IMR-90 (cell line): ENCODE measurements at regions of chr12 and their contacts with region 1.

Region 1: DNA sequence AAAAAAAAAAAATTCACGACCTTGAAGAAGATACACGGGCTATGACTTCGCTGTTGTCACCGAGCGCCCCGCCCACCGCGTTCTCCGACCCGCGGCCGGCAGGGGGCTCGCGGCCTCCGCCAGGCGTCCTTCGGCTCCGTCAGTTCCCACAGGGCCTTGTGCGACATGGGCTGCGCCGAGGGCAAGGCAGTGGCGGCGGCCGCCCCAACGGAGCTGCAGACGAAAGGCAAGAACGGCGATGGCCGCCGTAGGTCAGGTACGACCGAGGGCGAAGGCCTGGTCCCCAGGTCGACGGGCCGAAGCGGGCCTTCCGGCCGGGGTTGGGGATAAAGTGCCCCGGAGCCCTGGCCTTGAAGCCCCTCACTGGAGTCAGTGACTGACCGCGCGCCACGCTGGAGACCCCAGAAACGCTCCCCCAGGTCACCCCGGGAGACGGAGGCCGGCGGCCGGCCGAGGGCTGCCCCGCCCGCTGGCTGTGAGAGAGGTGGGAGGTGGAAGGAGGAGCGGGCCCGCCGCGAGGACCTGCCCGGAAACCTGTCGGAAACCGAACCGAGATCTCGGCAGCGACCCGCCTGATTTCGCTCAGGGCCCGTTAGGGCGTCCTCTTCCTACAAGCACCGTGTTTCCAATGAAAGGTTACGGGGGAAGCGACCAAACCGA is at the start of gene TXNRD1:
- DNase-seq: peak; percentile 76
- ATAC-seq: peak; percentile 71
- H3K4me3 ChIP-seq: peak within 1 kb of the TSS; percentile 57
- H3K27ac ChIP-seq: peak within 1 kb of the TSS; percentile 81
- H3K4me1 ChIP-seq: peaks cover 13% of the 10 kb centered on the region
- H3K27me3 ChIP-seq: no peaks in the 10 kb centered on the region
- CTCF ChIP-seq: peak; percentile 90
- POLR2A ChIP-seq: peak; percentile 63; the same call in 1 of the 2 replicates
- RAD21 ChIP-seq: peak; percentile 87
- total RNA-seq, gene TXNRD1: 582 and 671 TPM in 2 replicates

Region 2: DNA sequence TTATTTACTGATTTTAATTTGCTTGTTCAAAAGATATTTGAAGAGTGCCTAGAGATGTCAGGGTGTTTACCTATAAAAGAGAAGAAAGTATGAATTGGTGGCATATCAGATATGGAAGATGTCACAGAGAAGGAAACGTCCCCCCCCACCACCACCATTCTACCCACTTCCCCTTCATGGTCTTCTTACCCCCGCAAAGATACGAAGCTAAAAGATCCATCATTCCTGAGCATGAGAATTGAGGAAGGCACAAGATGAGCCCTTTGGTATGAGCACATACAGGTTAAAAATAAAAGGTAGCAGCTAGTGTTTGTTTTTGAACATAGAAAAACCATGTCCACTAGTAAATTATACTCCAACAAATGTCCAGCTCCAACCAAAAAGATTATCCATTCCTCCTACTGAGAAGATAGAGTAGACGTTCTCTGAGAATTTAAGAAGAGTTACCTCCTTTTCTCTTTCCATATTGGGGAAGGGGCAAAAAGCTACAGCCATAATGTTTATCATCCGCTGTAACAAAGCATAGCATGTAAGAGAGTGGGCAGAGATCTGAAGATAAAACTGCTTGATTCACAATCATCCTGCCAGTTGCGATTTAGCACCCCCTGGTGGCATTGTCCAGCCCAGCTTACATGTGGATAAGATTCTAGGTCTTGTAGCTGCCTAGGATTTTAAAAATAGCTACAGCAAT is 106.9 kb before region 1 on chr12:
- CTCF ChIA-PET with region 1: no interaction called
- POLR2A ChIA-PET with region 1: no interaction called
- dilution Hi-C with region 1: no loop called
- in situ Hi-C with region 1: no loop called
- intact Hi-C with region 1: no loop called
- DNase-seq: peak; percentile 87
- ATAC-seq: peak; percentile 96
- H3K4me3 ChIP-seq: no peak overlapping the region
- H3K27ac ChIP-seq: no peak overlapping the region
- H3K4me1 ChIP-seq: no peaks in the 10 kb centered on the region; the same call in 1 of the 2 replicates
- H3K27me3 ChIP-seq: no peaks in the 10 kb centered on the region
- CTCF ChIP-seq: peak; percentile 82
- POLR2A ChIP-seq: no peak
- RAD21 ChIP-seq: peak; percentile 73

Region 3: GRCh38 chr12:104258476-104259067 is 42.8 kb after region 1 on chr12:
- CTCF ChIA-PET with region 1: interaction called, 3 read pairs
- POLR2A ChIA-PET with region 1: no interaction called
- dilution Hi-C with region 1: no loop called
- in situ Hi-C with region 1: no loop called
- intact Hi-C with region 1: loop called (anchors 5 kb)
- DNase-seq: no peak
- ATAC-seq: no peak
- H3K4me3 ChIP-seq: no peak overlapping the region
- H3K27ac ChIP-seq: no peak overlapping the region
- H3K4me1 ChIP-seq: peaks cover 3% of the 10 kb centered on the region; the same call in 1 of the 2 replicates
- H3K27me3 ChIP-seq: no peaks in the 10 kb centered on the region
- CTCF ChIP-seq: no peak
- POLR2A ChIP-seq: no peak
- RAD21 ChIP-seq: no peak

Region 4: DNA sequence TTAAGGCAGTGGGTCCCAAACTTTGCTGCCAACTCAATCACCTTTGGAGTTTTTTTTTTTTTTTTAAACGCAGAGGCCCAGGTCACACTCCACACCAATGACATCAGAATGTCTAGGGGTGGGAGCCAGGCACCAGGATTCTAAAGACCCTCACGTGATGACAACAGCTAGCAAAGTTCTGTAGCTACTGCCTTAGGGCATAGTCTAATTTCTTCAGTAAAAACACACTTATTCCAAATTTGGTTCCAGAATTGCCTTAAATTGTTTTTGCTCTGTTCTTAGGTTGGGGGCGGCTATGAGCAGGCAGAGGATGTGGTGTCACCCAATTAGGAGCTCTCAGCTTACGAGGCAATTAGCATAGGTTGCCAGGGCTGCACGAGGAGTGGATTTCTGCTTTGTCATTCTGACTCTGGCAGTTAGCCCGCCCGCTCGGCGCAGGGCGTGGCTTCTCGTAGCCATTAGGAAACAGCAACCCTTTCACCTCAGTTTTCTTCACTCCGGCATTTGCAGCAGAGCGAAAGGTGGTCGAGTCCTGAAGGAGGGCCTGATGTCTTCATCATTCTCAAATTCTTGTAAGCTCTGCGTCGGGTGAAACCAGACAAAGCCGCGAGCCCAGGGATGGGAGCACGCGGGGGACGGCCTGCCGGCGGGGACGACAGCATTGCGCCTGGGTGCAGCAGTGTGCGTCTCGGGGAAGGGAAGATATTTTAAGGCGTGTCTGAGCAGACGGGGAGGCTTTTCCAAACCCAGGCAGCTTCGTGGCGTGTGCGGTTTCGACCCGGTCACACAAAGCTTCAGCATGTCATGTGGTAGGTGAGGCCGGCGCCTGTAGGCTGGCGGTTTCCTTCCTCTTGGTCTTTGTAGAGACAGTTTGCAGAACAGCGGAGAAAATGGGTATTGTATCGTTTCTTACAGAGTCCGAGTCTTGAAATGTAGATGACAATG is 71.0 kb after region 1 on chr12:
- CTCF ChIA-PET with region 1: interaction called, 12 read pairs
- POLR2A ChIA-PET with region 1: interaction called, 28 read pairs
- dilution Hi-C with region 1: no loop called
- in situ Hi-C with region 1: loop called (anchors 5 kb)
- intact Hi-C with region 1: loop called (anchors 1 kb)
- DNase-seq: peak; percentile 96
- ATAC-seq: peak; percentile 80
- H3K4me3 ChIP-seq: peak overlapping the region; percentile 68
- H3K27ac ChIP-seq: peak overlapping the region; percentile 88
- H3K4me1 ChIP-seq: peaks cover 14% of the 10 kb centered on the region
- H3K27me3 ChIP-seq: no peaks in the 10 kb centered on the region
- CTCF ChIP-seq: no peak
- POLR2A ChIP-seq: peak; percentile 98
- RAD21 ChIP-seq: no peak

Region 5: DNA sequence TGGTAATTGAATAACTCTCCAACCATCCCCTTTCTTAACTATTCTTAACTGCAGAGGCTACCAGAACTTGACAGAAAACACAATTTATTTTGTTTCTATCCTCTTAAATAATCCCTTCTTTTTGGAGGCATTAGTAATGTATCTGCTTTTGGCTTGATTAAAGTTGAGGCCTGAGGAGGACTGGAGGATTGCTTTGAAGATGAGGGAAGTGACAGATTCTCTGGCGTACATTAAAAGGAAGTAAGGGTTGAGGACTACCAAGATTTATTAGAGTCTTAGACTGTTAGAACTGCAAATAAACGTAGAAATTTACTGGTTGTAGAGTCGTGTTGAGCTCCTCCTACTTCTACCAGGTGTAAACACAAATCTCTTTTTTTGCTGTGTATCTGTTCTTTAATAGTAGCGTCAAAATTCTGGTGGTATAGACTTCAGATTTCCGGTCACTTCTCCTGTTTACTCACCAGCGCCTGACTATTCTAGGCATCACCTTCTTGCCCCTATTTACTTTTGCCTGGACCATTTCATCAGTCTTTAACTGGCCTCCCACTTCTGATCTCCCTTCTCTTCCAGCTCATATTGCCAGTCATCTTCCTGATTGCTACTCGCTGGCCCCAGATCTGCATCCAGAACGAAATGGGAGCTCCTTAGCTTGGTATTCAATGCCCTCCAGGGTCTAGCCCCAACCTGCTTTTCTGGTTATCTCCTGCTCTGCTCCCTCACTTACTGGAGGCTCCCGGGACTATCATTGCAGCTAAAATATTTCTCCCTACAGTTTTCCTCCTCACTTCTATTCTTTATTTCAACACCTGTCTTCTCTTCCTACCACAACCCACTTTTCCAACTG is 79.3 kb after region 1 on chr12:
- CTCF ChIA-PET with region 1: no interaction called
- POLR2A ChIA-PET with region 1: interaction called, 25 read pairs
- dilution Hi-C with region 1: no loop called
- in situ Hi-C with region 1: no loop called
- intact Hi-C with region 1: no loop called
- DNase-seq: no peak
- ATAC-seq: no peak
- H3K4me3 ChIP-seq: no peak overlapping the region
- H3K27ac ChIP-seq: 0 out of 2 replicates have a peak overlapping the region, but pooled peaks have one; percentile 1
- H3K4me1 ChIP-seq: peaks cover 23% of the 10 kb centered on the region
- H3K27me3 ChIP-seq: no peaks in the 10 kb centered on the region
- CTCF ChIP-seq: no peak
- POLR2A ChIP-seq: no peak
- RAD21 ChIP-seq: no peak

Region 6: DNA sequence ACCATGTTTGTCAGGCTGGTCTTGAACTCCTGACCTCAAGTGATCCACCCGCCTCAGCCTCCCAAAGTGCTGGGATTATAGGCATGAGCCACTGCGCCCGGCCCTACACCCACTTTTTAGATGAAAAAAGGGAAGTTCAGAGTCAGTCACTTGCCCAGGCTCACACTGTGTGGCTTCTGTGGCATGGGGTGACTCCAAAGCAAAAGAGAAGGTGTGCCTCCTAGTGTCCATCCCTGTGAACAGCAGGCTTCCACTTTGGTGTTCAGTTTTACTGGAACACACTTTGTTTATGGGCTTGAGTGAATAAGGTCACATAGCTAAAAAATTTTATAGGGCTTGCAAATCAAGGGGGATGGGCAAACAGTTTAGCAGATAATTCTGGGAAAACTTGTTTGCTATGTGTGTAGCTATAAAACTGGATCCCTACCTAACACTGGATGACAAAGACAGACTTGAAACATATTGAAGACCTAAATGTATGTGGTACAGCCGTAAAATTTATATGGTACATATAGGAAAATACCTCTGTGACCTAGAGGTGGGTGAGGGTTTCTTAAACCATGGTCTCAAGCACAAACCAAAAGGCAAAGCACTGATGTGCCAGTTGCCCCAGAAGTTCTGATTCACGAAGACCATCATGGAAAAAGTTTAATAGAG is 142.7 kb after region 1 on chr12:
- CTCF ChIA-PET with region 1: no interaction called
- POLR2A ChIA-PET with region 1: no interaction called
- dilution Hi-C with region 1: no loop called
- in situ Hi-C with region 1: no loop called
- intact Hi-C with region 1: loop called (anchors 5 kb)
- DNase-seq: peak; percentile 61
- ATAC-seq: peak; percentile 39
- H3K4me3 ChIP-seq: no peak overlapping the region
- H3K27ac ChIP-seq: no peak overlapping the region
- H3K4me1 ChIP-seq: peaks cover 3% of the 10 kb centered on the region
- H3K27me3 ChIP-seq: no peaks in the 10 kb centered on the region
- CTCF ChIP-seq: peak; percentile 59
- POLR2A ChIP-seq: no peak; the same call in 1 of the 2 replicates
- RAD21 ChIP-seq: peak; percentile 52

Region 7: DNA sequence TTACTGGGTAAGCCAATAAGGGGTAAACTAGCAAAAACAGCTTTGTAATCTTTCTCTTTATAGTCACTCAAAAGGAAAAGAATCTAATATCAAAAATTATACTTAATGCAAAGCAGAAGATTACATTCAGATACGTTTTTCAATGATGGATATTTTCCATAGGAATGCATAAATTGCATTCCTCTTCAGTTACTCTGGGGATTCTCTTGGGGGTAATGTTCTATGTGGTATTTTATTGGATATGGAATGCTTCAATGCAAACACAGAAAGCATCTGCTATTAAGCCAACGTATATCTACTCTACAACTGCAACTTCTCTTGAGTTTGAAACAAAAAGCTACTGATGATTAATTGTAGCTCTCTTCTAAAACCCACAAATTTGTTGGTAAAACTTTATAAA is 636.3 kb after region 1 on chr12:
- CTCF ChIA-PET with region 1: no interaction called
- POLR2A ChIA-PET with region 1: no interaction called
- dilution Hi-C with region 1: no loop called
- in situ Hi-C with region 1: no loop called
- intact Hi-C with region 1: no loop called
- DNase-seq: peak; percentile 41
- ATAC-seq: peak; percentile 70
- H3K4me3 ChIP-seq: no peak overlapping the region
- H3K27ac ChIP-seq: no peak overlapping the region
- H3K4me1 ChIP-seq: no peaks in the 10 kb centered on the region
- H3K27me3 ChIP-seq: no peaks in the 10 kb centered on the region
- CTCF ChIP-seq: no peak
- POLR2A ChIP-seq: no peak
- RAD21 ChIP-seq: no peak

Region 8: GRCh38 chr12:104886418-104887401 is 670.9 kb after region 1 on chr12:
- CTCF ChIA-PET with region 1: interaction called, 8 read pairs
- POLR2A ChIA-PET with region 1: interaction called, 10 read pairs
- dilution Hi-C with region 1: no loop called
- in situ Hi-C with region 1: no loop called
- intact Hi-C with region 1: no loop called
- DNase-seq: peak; percentile 90
- ATAC-seq: peak; percentile 60
- H3K4me3 ChIP-seq: no peak overlapping the region
- H3K27ac ChIP-seq: no peak overlapping the region
- H3K4me1 ChIP-seq: no peaks in the 10 kb centered on the region
- H3K27me3 ChIP-seq: no peaks in the 10 kb centered on the region
- CTCF ChIP-seq: no peak
- POLR2A ChIP-seq: no peak
- RAD21 ChIP-seq: no peak